ENCODE measurements at regions of chr17 and their contacts with region 1.

Region 1: GRCh38 chr17:37047631-37048104 is 98.9 kb downstream of the AATF start:
- DNase-seq: no peak
- H3K4me3 ChIP-seq: no peak overlapping the region
- H3K27ac ChIP-seq: no peak overlapping the region
- H3K4me1 ChIP-seq: no peaks in the 10 kb centered on the region
- H3K27me3 ChIP-seq: no peaks in the 10 kb centered on the region
- CTCF ChIP-seq: peak; percentile 79 to 92 (median 92)
- EP300 ChIP-seq: no peak
- POLR2A ChIP-seq: no peak

Region 2: GRCh38 chr17:36629252-36629847 is 418.3 kb before region 1 on chr17:
- intact Hi-C with region 1: loop called (anchors 1 kb)
- DNase-seq: no peak
- H3K4me3 ChIP-seq: no peak overlapping the region
- H3K27ac ChIP-seq: no peak overlapping the region
- H3K4me1 ChIP-seq: peaks cover 2 to 15% (median 5%) of the 10 kb centered on the region in 4 donors
- H3K27me3 ChIP-seq: peaks cover 0 to 69% (median 0%) of the 10 kb centered on the region in 4 donors
- CTCF ChIP-seq: peak in 2 of 3 experiments; percentile 94 to 97
- EP300 ChIP-seq: no peak
- POLR2A ChIP-seq: no peak

Region 3: DNA sequence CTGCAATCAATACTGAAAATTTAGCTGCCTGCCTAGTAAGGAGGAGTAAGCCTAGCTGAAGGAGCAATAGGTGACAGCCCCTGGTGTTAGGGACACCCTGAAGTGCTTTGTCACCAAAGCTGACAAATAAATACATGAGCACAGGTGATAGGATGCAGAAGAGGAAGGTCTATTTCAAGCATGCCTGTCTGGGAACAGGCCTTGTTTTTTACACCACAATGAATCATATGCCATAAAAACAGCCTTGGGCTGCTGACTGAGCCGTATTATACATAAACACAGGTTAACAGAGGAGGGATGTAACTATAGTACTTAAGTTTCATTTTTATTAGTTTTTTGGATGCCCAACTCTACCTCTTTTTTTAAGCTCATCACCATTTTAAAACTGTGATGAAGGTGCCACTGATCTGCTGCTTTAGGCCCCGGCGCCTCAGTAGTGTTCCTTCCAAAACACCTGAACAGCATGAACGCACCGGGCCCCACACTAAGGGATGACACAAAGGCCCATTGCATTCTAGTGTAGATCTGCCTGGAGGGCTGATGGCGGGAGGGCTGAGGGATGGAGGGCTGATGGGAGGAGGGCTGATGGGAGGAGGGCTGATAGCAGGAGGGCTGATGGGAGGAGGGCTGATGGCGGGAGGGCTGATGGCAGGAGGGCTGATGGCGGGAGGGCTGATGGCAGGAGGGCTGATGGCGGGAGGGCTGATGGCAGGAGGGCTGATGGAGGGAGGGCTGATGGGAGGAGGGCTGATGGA is 51.4 kb after region 1 on chr17:
- intact Hi-C with region 1: no loop called
- DNase-seq: no peak
- H3K4me3 ChIP-seq: no peak overlapping the region
- H3K27ac ChIP-seq: no peak overlapping the region
- H3K4me1 ChIP-seq: no peaks in the 10 kb centered on the region
- H3K27me3 ChIP-seq: no peaks in the 10 kb centered on the region
- CTCF ChIP-seq: no peak
- EP300 ChIP-seq: no peak
- POLR2A ChIP-seq: no peak

Region 4: DNA sequence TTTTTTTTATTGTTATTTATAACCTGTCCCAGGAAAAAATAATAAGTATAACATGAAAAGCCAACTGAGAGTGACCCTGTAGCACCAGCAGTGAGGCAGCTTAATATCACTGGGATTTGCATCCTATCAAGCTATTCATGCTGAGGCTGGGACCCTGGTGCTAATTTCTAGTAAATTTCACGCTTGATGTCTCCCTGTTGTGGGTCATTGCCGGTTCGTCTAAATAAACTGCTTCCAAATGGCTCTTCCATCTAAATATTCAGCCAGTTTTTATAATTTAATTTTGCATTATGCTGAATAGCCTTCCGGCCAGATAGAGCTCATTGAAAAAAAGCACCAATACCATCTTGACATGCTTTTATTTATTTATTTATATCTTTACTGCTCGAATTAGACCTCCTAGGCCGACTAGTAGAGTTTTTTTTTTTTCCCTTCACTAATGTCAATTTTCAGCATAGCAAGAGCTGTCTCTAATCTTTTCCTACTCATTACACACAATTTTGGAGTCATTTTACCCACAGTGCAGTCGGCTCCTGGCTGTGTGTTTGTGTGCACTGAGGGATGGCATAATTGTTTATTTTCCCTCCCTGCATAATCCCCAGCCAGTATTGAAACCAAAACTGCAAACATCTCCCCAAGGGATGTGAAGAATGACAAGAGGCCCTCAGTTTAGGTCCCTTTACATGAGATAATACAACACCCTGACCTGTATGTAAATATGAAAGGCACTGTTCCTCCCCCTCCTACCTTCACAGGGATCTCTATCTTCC is 69.9 kb after region 1 on chr17:
- intact Hi-C with region 1: loop called (anchors 10 kb)
- DNase-seq: no peak
- H3K4me3 ChIP-seq: no peak overlapping the region
- H3K27ac ChIP-seq: no peak overlapping the region
- H3K4me1 ChIP-seq: no peaks in the 10 kb centered on the region
- H3K27me3 ChIP-seq: no peaks in the 10 kb centered on the region
- CTCF ChIP-seq: no peak
- EP300 ChIP-seq: no peak
- POLR2A ChIP-seq: no peak

Measured in esophagus muscularis mucosa (tissue), 4 donors.